OCI-LY7 (cell line): ENCODE measurements at regions of chr14 and their contacts with region 1.

Region 1: DNA sequence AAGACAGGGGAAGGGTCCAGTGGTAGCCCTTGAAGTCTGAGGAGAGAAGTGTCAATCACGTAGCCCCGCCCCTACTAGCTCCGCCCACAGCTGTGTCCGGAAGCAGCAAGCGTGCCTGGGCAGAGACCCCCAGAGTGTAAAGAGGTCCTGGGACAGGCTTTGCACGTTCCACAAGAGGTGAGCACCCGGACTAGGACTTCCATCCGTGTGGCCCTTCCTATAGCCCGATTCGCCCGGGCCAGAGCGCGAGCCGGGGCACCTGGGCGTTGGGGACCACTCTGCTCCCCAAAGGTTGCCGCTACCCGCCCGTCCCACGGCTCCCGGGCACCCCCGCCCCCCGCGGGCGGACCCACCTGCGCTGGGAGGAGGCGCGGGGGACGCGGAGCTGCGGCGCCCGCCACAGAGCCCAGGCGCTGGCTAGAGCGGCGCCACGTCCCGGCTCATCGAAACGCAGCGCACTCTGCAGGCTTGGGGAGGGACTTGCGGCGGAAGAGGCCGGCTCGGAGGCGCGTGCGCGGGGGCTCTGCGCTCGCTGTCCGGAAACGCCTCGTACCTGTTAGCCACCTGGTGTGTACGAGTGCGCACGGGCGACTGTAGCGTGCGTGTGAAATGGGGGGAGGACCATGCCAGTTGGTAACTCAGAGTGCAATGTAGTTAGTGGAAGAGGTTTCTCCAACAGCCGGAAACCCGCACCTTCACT is at the start of gene RABGGTA:
- DNase-seq: peak; percentile 97
- H3K4me3 ChIP-seq: peak within 1 kb of the TSS; percentile 84
- H3K27ac ChIP-seq: peak within 1 kb of the TSS; percentile 84
- H3K4me1 ChIP-seq: peaks cover 43% of the 10 kb centered on the region
- CTCF ChIP-seq: peak; percentile 80
- total RNA-seq, gene RABGGTA: 16.7 and 24.3 TPM in 2 replicates

Region 2: DNA sequence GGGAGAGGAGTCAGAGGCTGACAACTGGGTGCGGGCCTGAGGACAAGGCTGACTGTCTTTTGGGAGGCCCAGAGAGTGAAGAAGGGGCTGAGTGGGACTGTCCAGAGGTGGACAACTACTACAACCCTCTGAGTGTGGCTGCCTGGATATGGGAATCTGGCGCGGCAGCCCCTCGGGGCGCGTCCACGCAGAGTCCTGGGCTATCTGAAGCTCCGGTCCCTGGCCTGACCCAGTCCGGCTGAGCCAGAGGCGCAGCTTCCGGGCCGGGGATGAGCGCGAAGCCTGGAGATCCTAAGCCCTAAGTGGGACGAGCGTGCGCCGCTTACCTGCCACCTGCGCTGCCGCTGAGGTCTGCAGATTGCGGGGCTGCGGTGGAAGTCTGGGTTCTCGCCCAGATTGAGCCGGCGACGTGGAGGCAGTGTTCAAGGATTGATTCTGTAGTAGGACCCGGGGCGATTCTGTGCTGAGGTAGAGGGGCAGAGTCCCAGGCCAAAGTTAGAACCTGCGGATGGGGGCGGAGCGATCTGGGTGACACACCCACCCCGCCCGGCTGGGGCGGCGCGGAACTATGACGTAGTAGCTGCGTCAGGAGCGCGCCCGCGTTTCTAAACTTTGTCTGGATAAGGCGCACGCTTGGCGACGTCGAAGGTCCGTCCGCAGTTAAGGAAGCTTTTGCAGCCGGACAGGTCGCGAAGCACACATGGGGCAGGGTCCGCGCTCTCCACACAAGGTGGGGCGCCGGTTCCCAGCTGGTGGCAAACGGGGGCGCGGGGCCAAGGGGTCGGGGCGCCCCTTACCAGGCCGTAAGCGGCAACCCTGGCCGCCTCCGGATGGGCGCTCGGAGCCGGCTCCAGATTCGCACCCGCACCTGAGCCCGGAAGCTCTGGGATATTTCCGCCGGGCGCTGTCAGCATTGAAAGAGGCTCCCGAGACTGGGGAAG is 28.2 kb after region 1 on chr14 and contains the starts of genes DHRS1 and NOP9:
- CTCF ChIA-PET with region 1: interaction called, 4 read pairs
- POLR2A ChIA-PET with region 1: interaction called, 11 read pairs
- intact Hi-C with region 1: loop called (anchors 2 kb)
- DNase-seq: peak; percentile 94
- H3K4me3 ChIP-seq: peak within 1 kb of the TSS; percentile 99
- H3K27ac ChIP-seq: peak within 1 kb of the TSS; percentile 38
- H3K4me1 ChIP-seq: peaks cover 30% of the 10 kb centered on the region
- CTCF ChIP-seq: no peak
- total RNA-seq, gene DHRS1: 21.0 and 27.4 TPM in 2 replicates
- total RNA-seq, gene NOP9: 30.6 and 33.2 TPM in 2 replicates

Region 3: DNA sequence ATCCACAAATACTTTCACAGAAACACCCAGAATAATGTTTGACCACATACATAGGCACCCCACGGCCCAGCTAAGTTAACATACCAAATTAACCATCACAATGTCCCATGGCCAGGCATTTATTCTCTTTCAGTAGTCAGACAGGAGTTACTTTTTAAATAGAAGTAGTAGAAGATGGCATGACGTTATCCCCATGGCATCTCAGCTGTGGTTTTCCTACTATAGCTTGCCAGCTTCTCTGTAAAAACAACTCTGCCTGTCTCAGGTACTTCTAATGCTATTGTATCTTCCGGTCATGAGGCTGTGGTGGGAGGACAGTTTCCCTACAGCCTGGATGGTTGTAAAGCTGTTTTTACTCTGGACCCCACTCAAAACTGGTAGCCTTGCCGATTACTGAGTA is 285.5 kb after region 1 on chr14:
- CTCF ChIA-PET with region 1: no interaction called
- POLR2A ChIA-PET with region 1: no interaction called
- intact Hi-C with region 1: no loop called
- DNase-seq: no peak
- H3K4me3 ChIP-seq: no peak overlapping the region
- H3K27ac ChIP-seq: no peak overlapping the region
- H3K4me1 ChIP-seq: no peaks in the 10 kb centered on the region
- CTCF ChIP-seq: no peak